ENCODE measurements at regions of chr14 and their contacts with region 1.

Region 1: GRCh38 chr14:74893614-74894091 is 11.9 kb downstream of the DLST start:
- DNase-seq: no peak
- ATAC-seq: no peak
- H3K4me3 ChIP-seq: no peak overlapping the region
- H3K4me3 Mint-ChIP-seq: no peak overlapping the region
- H3K27ac ChIP-seq: no peak overlapping the region
- H3K27ac Mint-ChIP-seq: no peak overlapping the region
- H3K4me1 ChIP-seq: no peaks in the 10 kb centered on the region
- H3K4me1 Mint-ChIP-seq: peaks cover 10% of the 10 kb centered on the region
- H3K27me3 ChIP-seq: no peaks in the 10 kb centered on the region
- H3K27me3 Mint-ChIP-seq: no peaks in the 10 kb centered on the region
- CTCF ChIP-seq: no peak

Region 2: GRCh38 chr14:74838166-74838565 is 55.5 kb before region 1 on chr14:
- CTCF ChIA-PET with region 1: no interaction called
- POLR2A ChIA-PET with region 1: no interaction called
- intact Hi-C with region 1: no loop called
- DNase-seq: peak in 2 of 9 experiments; percentile 50 to 73
- ATAC-seq: peak; percentile 76
- H3K4me3 ChIP-seq: peak overlapping the region in 1 of 2 experiments; percentile 36
- H3K4me3 Mint-ChIP-seq: peak overlapping the region; percentile 76
- H3K27ac ChIP-seq: peak overlapping the region; percentile 71 to 93
- H3K27ac Mint-ChIP-seq: peak overlapping the region; percentile 94
- H3K4me1 ChIP-seq: peaks cover 76% of the 10 kb centered on the region
- H3K4me1 Mint-ChIP-seq: peaks cover 81% of the 10 kb centered on the region
- H3K27me3 ChIP-seq: no peaks in the 10 kb centered on the region
- H3K27me3 Mint-ChIP-seq: no peaks in the 10 kb centered on the region
- CTCF ChIP-seq: no peak

Region 3: DNA sequence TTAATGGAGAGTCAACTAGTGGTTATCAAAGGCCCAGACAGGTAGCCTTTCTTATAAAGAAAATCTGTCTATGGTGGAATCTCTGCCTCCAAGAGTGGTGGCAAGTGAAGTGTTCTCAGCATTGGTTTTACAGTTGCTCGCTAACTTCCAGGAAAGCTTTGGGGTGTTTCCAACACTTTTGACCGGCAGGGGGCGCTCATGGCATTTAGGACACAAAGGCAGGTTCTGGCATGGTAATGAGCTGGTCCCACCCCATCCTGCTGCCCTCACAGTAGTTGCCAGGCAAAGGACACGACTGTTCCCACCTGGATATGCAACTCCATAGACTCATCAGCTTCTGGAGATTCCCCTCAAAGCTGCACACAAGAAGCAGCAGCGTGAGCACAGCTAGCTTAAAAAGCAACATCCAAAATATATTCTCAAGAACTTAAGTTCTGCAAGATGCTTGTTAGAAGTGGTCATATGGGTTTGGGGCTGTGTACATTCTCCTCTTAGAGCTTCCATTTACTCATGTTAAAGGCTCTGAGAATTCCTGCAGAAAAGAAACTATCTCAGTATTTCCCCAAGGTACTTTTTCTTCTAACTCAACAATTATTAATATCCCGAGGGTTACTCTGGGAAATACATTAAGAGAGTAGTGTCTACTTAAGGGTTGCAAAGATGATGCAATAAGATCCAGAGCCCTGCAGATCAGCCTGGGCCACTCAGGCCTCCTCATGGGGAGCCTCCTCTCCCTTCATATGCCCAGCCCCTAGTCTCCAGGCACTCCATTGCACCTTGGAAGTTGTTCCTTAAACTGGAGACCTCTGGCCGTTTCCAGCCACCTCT is 32.5 kb before region 1 on chr14:
- CTCF ChIA-PET with region 1: interaction called, 725 read pairs
- POLR2A ChIA-PET with region 1: interaction called, 4 read pairs
- intact Hi-C with region 1: no loop called
- DNase-seq: peak; percentile 85 to 99 (median 90)
- ATAC-seq: peak; percentile 84
- H3K4me3 ChIP-seq: no peak overlapping the region
- H3K4me3 Mint-ChIP-seq: no peak overlapping the region
- H3K27ac ChIP-seq: no peak overlapping the region
- H3K27ac Mint-ChIP-seq: no peak overlapping the region
- H3K4me1 ChIP-seq: peaks cover 4% of the 10 kb centered on the region
- H3K4me1 Mint-ChIP-seq: peaks cover 7% of the 10 kb centered on the region
- H3K27me3 ChIP-seq: no peaks in the 10 kb centered on the region
- H3K27me3 Mint-ChIP-seq: no peaks in the 10 kb centered on the region
- CTCF ChIP-seq: peak; percentile 85